Heart left ventricle (tissue), 16 donors: ENCODE measurements at regions of chr13 and their contacts with region 1.

Region 1: GRCh38 chr13:28220166-28220565 is 81.8 kb downstream of the PAN3 start:
- DNase-seq: no peak
- ATAC-seq: no peak
- H3K4me3 ChIP-seq: no peak overlapping the region
- H3K27ac ChIP-seq: no peak overlapping the region
- H3K4me1 ChIP-seq: no peaks in the 10 kb centered on the region
- H3K27me3 ChIP-seq: no peaks in the 10 kb centered on the region
- CTCF ChIP-seq: no peak
- POLR2A ChIP-seq: no peak

Region 2: GRCh38 chr13:28231642-28232041 is 11.5 kb after region 1 on chr13:
- intact Hi-C with region 1: loop called in 1 of 10 experiments (anchors 1 kb)
- DNase-seq: no peak
- ATAC-seq: no peak
- H3K4me3 ChIP-seq: no peak overlapping the region
- H3K27ac ChIP-seq: no peak overlapping the region
- H3K4me1 ChIP-seq: no peaks in the 10 kb centered on the region
- H3K27me3 ChIP-seq: no peaks in the 10 kb centered on the region
- CTCF ChIP-seq: no peak
- POLR2A ChIP-seq: no peak